ENCODE measurements at regions of chr10 and their contacts with region 1.

Region 1: DNA sequence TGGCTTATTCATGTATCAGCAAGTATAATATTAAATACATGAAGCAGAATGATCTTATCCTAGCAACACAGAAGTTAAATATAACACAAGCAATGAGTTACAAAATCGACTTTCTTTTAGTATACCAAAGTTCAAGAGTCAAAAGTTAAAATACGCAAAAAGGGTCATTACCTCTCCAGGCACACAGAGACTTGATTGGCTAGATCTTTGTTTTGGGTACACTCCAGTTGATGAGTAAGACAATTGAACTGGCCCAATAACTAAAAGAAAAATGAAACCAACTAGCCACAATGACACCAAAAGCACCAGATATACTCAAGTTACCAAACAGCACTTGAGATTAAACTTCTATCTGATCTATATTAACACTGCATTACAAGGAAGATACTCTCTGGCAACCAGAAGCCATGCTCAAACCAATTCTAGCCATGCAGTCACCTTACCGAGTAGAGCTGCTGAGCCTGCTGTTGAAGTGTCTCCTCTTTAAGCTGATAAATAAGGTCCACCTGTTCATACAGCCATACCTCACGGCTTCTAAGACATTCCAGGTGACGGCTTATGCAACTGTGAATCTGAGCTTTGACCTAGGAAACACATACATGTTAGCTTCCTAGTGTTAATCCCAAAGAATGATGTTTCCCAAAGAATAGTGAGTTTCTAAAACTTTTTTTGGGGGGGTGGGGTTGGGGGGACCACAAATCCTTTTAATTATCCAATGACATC is 15.6 kb downstream of the NCOA4 start:
- DNase-seq: no peak
- H3K4me3 ChIP-seq: no peak overlapping the region
- H3K27ac ChIP-seq: no peak overlapping the region
- H3K4me1 ChIP-seq: peaks cover 17 to 40% (median 26%) of the 10 kb centered on the region in 4 experiments
- H3K27me3 ChIP-seq: no peaks in the 10 kb centered on the region

Region 2: DNA sequence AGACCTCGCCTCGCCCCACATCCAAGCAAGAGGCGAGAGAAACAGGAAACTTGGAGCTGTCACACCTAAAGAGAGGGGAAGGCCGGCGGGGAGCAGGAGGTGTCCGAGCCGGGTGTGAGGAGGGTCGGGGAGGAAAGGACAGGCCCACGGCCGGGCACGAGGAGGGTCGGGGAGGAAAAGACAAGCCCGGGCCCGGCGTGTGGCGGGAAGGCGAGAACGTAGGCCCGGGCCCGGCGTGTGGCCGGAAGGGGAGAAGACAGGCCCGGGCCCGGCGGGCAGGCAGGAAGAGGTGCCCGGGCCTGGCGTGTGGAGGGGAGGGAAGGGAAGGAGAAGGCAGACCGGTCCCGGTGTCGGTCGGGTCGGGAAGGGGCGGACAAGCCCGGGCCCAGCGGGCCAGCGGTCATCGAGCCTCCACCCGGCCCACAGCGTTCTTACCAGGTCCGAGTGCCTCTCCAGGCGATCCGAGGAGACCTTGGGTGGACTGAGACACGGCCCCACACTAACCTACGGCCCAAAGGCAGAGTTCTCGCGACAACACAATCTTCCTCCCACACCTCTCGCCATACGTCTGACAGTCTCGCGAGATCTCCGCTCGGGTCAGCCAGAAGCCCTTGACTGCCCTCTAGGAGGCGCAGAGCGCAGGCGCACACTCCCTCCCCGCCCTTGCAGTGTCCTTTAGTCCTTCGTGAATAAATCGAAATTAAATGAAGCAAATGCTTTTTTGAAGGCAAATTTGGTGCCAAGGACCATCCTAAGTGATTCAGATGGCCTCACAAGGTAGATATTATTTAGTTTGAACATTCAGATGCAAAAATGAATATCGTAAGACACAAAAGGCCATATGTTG is 15.5 kb after region 1 on chr10 and contains the start of gene NCOA4:
- CTCF ChIA-PET with region 1: interaction called, 14 read pairs
- POLR2A ChIA-PET with region 1: no interaction called
- DNase-seq: peak; percentile 98 to 99 (median 99)
- H3K4me3 ChIP-seq: peak within 1 kb of the TSS; percentile 72 to 96 (median 92)
- H3K27ac ChIP-seq: peak within 1 kb of the TSS; percentile 97 to 99
- H3K4me1 ChIP-seq: peaks cover 13 to 64% (median 44%) of the 10 kb centered on the region in 4 experiments
- H3K27me3 ChIP-seq: no peaks in the 10 kb centered on the region

Region 3: DNA sequence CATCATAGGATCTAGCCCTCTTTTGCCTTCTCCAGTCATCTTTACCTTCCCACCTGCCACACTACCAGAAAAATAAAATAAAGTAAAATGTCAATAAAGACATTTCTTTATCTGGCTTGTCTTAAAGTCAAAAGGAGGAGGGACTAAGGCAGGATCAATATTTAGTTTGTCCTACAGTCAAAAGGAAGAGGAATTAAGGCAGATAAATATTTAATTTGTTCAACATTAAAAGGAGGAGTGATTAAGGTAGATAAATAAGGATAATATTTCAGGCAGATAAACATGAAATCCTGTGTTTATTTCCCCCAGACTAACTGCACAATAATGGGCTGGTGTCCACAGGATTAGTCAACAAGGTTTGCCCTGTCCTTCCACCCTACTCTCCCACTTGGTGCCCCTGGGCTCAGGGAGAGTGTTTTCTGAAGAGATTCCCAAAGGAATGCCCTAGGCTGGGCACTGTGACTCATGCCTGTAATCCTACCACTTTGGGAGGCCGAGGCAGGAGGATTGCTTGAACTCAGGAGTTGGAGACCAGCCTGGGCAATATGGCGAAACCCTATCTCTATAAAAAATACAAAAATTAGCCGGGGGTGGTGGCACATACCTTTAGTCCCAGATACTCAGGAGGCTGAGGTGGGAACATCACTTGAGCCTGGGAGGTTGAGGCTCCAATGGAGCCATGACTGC is 49.6 kb after region 1 on chr10:
- CTCF ChIA-PET with region 1: no interaction called
- POLR2A ChIA-PET with region 1: no interaction called
- DNase-seq: no peak
- H3K4me3 ChIP-seq: no peak overlapping the region
- H3K27ac ChIP-seq: no peak overlapping the region
- H3K4me1 ChIP-seq: peaks cover 0 to 4% (median 2%) of the 10 kb centered on the region in 4 experiments
- H3K27me3 ChIP-seq: no peaks in the 10 kb centered on the region

Measured in common myeloid progenitor, CD34-positive (primary cell).